ENCODE measurements at regions of chr7 and their contacts with region 1.

Region 1: DNA sequence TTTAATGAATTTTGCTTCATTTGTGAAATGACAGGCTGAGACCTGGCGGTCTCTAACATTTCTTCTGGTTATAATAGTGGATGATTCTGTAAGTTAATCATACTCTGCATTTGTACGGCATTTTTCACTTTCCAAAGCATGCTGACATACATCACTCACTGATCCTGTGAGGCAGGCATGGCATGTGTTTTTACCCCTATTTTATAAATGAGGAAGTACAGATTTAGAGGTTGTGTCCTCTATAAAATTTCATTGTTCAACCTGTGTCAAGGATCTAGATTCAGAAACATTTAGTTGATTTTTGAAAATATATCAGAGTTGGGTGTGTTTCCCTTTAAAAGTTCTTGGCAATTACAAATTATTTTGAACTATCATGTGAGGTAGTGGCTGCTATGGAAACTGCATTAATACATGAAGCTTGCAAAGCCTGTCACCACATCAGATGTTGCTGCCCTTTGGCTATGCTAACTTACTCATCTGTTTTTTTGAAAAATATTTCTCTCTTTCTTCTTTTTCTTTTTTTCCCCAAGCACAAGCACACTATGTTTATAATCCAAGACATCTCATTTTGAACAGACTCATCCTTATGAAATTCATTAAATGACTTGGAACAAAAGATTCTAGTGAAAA is 172.7 kb downstream of the GNAI1 start:
- DNase-seq: no peak

Region 2: GRCh38 chr7:80231707-80232106 is 75.6 kb before region 1 on chr7:
- intact Hi-C with region 1: no loop called
- DNase-seq: no peak

Region 3: DNA sequence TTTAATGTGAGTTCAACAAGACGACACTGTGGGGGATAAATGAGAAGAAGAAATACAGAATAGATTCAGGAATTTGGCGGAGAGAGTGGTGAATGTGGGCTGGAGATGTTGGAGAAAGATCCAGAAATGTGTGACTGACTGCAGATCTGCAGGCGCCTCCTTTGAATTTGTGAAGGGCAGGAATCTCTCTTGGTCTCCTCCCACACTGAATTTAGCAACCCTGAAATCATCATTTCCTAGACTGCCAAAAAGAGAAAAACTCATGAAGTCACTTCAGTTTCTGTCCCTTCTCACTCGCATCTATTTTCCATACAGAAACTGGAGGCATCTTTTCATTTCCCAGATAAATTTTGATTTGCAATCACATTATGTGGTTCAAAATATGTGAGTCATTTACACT is 44.0 kb before region 1 on chr7:
- intact Hi-C with region 1: loop called in 1 of 2 experiments (anchors 2 kb)
- DNase-seq: no peak

Region 4: GRCh38 chr7:80563561-80564327 is 256.4 kb after region 1 on chr7:
- intact Hi-C with region 1: no loop called
- DNase-seq: peak; percentile 69